GM18951 (cell line): ENCODE measurements at regions of chr18 and their contacts with region 1.

Region 1: GRCh38 chr18:741931-742512 is 29.6 kb upstream of the ENOSF1 start:
- POLR2A ChIP-seq: no peak

Region 2: GRCh38 chr18:172361-172760 is 569.7 kb before region 1 on chr18:
- in situ Hi-C with region 1: no loop called
- POLR2A ChIP-seq: no peak

Region 3: GRCh38 chr18:824179-824578 is 82.2 kb after region 1 on chr18:
- in situ Hi-C with region 1: loop called (anchors 5 kb)
- POLR2A ChIP-seq: no peak